ENCODE measurements at regions of chr3 and their contacts with region 1.

Region 1: DNA sequence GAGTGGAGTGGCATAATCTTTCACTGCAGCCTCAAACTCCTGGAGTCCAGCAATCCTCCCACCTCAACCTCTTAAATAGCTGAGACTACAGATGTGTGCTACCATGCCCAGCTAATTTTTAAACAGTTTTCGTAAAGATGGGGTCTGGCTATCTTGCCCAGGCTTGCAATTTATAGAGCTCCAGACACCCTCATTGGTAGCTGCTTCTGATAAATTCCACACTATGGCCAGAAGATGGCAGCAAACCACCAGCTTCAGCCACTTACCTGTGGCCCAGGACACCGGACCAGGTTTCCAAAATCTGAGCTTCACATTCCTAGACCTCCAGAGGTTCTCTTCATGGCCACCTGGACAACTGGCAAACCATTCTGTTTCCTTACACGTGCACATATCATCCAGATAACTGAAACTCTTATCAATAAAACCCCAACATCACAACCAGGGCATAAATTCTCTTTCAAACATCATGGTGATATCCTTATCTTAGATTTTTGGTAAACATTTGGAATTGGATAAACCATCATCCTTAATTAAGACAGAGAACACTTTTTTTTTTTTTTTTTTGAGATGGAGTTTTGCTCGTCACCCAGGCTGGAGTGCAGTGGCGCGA is 28.9 kb downstream of the FBXW12 start:
- DNase-seq: peak; percentile 75 to 76
- H3K4me3 ChIP-seq: no peak overlapping the region
- H3K4me3 Mint-ChIP-seq: no peak overlapping the region
- H3K27ac Mint-ChIP-seq: peak overlapping the region; percentile 63
- H3K4me1 ChIP-seq: no peaks in the 10 kb centered on the region
- H3K4me1 Mint-ChIP-seq: peaks cover 11% of the 10 kb centered on the region
- H3K27me3 ChIP-seq: no peaks in the 10 kb centered on the region
- H3K27me3 Mint-ChIP-seq: no peaks in the 10 kb centered on the region
- CTCF ChIP-seq: peak; percentile 73 to 87

Region 2: DNA sequence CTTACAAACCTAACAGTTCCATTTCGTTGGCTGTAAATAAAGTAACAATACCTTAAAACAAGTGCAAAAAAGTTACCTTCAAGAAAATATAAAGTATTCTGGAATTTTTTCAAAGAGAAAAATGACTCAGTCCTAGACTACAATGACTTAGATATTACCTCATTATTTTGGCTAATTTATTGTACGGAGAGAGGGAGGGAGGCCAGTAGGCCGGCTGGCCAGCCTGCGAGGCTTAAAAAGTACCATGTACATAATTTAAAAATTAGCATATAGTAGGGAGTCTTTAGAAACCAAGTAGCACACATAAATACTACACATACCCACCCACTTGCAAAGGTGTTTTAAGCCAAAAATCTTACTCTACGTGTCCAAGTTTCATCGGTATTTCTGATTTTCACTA is 342.8 kb before region 1 on chr3:
- CTCF ChIA-PET with region 1: no interaction called
- POLR2A ChIA-PET with region 1: no interaction called
- intact Hi-C with region 1: no loop called
- DNase-seq: no peak
- H3K4me3 ChIP-seq: no peak overlapping the region
- H3K4me3 Mint-ChIP-seq: no peak overlapping the region
- H3K27ac Mint-ChIP-seq: no peak overlapping the region
- H3K4me1 ChIP-seq: no peaks in the 10 kb centered on the region
- H3K4me1 Mint-ChIP-seq: no peaks in the 10 kb centered on the region
- H3K27me3 ChIP-seq: no peaks in the 10 kb centered on the region
- H3K27me3 Mint-ChIP-seq: no peaks in the 10 kb centered on the region
- CTCF ChIP-seq: no peak

Region 3: DNA sequence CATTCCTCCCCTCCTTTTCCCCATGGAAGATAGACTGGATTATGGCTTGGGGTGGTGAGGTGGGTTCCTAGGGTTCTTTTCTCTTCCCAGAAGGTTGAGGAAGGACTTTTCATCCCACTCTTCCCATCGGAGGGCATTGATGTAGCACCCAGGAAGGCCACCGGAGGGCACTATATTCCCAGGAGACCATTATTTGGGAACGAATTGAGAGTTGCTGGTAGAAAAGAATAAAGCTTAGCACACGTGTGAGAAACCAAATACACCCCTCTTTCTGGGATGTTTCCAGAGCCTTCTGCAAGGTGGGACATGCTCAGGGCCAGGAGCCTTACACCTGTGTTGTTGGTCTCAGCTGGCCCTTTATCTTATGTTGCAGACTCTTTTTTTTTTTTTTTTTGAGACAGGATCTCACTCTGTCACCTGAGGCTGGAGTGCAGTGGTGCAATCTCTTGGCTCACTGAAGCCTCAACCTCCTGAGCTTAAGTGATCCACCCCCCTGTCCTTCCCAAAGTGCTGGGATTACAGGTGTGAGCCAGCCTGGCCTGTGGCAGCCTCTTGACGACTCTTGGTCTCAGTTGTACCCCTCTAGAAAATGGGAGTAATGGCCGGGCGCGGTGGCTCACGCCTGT is 206.4 kb before region 1 on chr3:
- CTCF ChIA-PET with region 1: interaction called, 16 read pairs
- POLR2A ChIA-PET with region 1: no interaction called
- intact Hi-C with region 1: no loop called
- DNase-seq: peak; percentile 63 to 79
- H3K4me3 ChIP-seq: no peak overlapping the region
- H3K4me3 Mint-ChIP-seq: no peak overlapping the region
- H3K27ac Mint-ChIP-seq: no peak overlapping the region
- H3K4me1 ChIP-seq: peaks cover 4% of the 10 kb centered on the region; the same call in 1 of the 2 replicates
- H3K4me1 Mint-ChIP-seq: no peaks in the 10 kb centered on the region
- H3K27me3 ChIP-seq: no peaks in the 10 kb centered on the region
- H3K27me3 Mint-ChIP-seq: no peaks in the 10 kb centered on the region
- CTCF ChIP-seq: peak; percentile 72 to 85

Region 4: DNA sequence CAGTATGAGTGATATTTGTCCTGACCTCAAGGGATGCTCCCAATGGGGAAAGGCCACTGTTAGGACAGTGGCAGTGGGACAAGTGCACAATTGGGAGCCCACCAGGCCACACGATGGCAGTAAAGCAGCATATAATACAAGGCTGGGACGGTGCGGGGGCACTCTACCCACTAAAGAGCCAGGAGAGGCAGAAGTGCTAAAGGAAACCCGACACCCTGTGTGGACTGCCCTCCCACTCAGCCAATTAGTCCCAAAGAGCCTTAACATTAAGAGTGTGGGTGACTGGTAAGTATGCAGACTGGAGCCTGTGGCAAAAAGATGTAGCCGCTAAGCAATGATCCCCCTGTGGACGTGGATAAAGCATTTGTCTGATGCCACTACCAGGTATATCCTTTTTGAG is 168.2 kb before region 1 on chr3:
- CTCF ChIA-PET with region 1: no interaction called
- POLR2A ChIA-PET with region 1: no interaction called
- intact Hi-C with region 1: loop called (anchors 2 kb)
- DNase-seq: peak; percentile 85 to 87
- H3K4me3 ChIP-seq: no peak overlapping the region
- H3K4me3 Mint-ChIP-seq: peak overlapping the region; percentile 49
- H3K27ac Mint-ChIP-seq: peak overlapping the region; percentile 68
- H3K4me1 ChIP-seq: peaks cover 9% of the 10 kb centered on the region
- H3K4me1 Mint-ChIP-seq: peaks cover 18% of the 10 kb centered on the region
- H3K27me3 ChIP-seq: no peaks in the 10 kb centered on the region
- H3K27me3 Mint-ChIP-seq: no peaks in the 10 kb centered on the region
- CTCF ChIP-seq: peak; percentile 59 to 69

Region 5: DNA sequence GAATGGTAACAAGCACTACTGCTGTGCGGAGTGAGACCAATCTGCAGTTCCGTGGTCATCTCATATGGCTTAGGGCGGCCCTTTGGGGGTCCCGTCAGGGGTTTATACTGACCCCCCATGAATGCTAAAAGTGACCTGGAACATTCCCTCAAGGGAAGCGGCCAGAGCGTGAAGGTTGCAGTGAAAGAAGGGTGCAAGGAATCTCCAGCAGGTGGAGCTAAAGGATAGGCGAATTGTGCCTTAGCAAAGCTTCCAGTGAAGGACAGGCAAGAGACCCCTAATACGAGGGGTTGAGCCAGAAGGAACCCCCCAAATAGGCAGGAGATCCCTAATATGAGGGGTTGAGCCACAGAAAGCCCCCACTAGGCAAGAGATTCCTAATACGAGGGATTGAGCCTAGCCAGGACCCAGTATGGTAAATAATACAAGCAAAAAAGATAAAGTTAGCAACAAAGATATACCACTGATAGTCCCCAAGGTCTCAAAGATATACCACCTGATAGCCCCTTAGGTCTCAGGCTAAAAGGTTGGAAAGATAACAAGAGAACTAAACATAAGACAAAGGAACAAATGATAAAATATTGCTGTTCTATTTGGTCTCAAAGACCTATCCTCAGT is 127.2 kb before region 1 on chr3:
- CTCF ChIA-PET with region 1: interaction called, 33 read pairs
- POLR2A ChIA-PET with region 1: no interaction called
- intact Hi-C with region 1: loop called (anchors 1 kb)
- DNase-seq: peak; percentile 60 to 77
- H3K4me3 ChIP-seq: no peak overlapping the region
- H3K4me3 Mint-ChIP-seq: no peak overlapping the region
- H3K27ac Mint-ChIP-seq: no peak overlapping the region
- H3K4me1 ChIP-seq: peaks cover 32% of the 10 kb centered on the region
- H3K4me1 Mint-ChIP-seq: peaks cover 35% of the 10 kb centered on the region
- H3K27me3 ChIP-seq: no peaks in the 10 kb centered on the region
- H3K27me3 Mint-ChIP-seq: no peaks in the 10 kb centered on the region
- CTCF ChIP-seq: peak; percentile 79 to 80

Region 6: GRCh38 chr3:48429317-48429959 is 28.5 kb after region 1 on chr3:
- CTCF ChIA-PET with region 1: interaction called, 405 read pairs
- POLR2A ChIA-PET with region 1: interaction called, 8 read pairs
- intact Hi-C with region 1: no loop called
- DNase-seq: peak; percentile 87
- H3K4me3 ChIP-seq: peak overlapping the region; percentile 84
- H3K4me3 Mint-ChIP-seq: peak overlapping the region; percentile 98
- H3K27ac Mint-ChIP-seq: no peak overlapping the region
- H3K4me1 ChIP-seq: peaks cover 65% of the 10 kb centered on the region
- H3K4me1 Mint-ChIP-seq: peaks cover 52% of the 10 kb centered on the region
- H3K27me3 ChIP-seq: no peaks in the 10 kb centered on the region
- H3K27me3 Mint-ChIP-seq: no peaks in the 10 kb centered on the region
- CTCF ChIP-seq: no peak

Region 7: DNA sequence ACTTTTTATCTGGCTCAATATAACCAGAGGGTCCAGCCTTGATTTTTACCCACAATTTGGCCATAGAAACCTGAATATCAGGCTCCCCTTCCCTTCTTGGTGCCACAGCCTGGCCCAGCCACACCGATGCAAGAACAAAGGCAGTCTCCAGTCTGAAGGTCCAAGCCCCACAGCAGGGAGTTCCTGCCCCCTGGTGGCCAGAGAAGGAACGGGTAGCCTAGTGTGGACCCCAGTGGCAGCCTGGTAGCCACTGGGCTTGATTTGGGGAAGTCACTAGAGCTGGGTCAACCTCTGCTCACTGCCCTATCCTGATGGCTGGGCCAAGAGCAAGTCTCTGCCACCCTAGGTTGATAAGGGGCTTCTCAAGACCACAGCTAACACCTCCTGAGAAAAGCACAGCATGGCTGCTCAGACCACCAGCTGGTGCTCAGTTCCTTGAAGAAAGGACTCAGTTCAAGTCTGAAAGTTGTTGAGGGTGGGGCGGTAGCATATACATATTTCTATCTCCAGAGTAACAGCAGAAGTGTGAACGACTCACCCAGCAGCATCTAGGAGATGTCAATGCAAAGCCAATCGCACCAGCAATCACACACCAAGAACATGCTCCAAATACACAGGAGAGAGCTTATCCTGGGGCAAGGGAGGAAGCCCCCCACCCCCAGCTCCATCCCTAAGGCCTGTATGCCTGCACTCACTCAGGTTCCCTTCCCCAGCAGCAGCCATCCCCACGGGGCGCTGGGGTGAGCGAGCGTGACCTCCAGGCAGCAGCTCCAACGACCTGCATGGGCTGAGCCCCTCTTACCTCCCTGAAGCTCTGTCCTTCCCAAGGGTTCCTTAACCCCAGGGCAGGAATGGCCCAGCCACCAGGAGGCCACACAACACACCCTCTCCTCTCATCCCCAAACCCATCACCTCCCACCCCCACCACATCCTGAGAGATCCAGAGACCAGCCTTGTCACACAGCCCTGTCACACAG is 148.1 kb after region 1 on chr3:
- CTCF ChIA-PET with region 1: interaction called, 12 read pairs
- POLR2A ChIA-PET with region 1: no interaction called
- intact Hi-C with region 1: no loop called
- DNase-seq: peak; percentile 80 to 87
- H3K4me3 ChIP-seq: no peak overlapping the region
- H3K4me3 Mint-ChIP-seq: no peak overlapping the region
- H3K27ac Mint-ChIP-seq: no peak overlapping the region
- H3K4me1 ChIP-seq: peaks cover 16% of the 10 kb centered on the region
- H3K4me1 Mint-ChIP-seq: peaks cover 11% of the 10 kb centered on the region
- H3K27me3 ChIP-seq: no peaks in the 10 kb centered on the region
- H3K27me3 Mint-ChIP-seq: no peaks in the 10 kb centered on the region
- CTCF ChIP-seq: peak; percentile 86 to 90

Region 8: GRCh38 chr3:48798998-48799397 is 398.1 kb after region 1 on chr3:
- CTCF ChIA-PET with region 1: no interaction called
- POLR2A ChIA-PET with region 1: no interaction called
- intact Hi-C with region 1: no loop called
- DNase-seq: no peak
- H3K4me3 ChIP-seq: no peak overlapping the region
- H3K4me3 Mint-ChIP-seq: no peak overlapping the region
- H3K27ac Mint-ChIP-seq: no peak overlapping the region
- H3K4me1 ChIP-seq: no peaks in the 10 kb centered on the region; the same call in 1 of the 2 replicates
- H3K4me1 Mint-ChIP-seq: peaks cover 7% of the 10 kb centered on the region
- H3K27me3 ChIP-seq: no peaks in the 10 kb centered on the region
- H3K27me3 Mint-ChIP-seq: no peaks in the 10 kb centered on the region
- CTCF ChIP-seq: no peak